ENCODE measurements at regions of chr2 and their contacts with region 1.

Region 1: GRCh38 chr2:43426305-43427031 is 169.4 kb downstream of the THADA start:
- H3K4me3 Mint-ChIP-seq: no peak overlapping the region
- H3K27ac Mint-ChIP-seq: peak overlapping the region; percentile 83
- H3K4me1 Mint-ChIP-seq: peaks cover 35% of the 10 kb centered on the region
- H3K27me3 Mint-ChIP-seq: no peaks in the 10 kb centered on the region

Region 2: GRCh38 chr2:43455731-43456642 is 29.5 kb after region 1 on chr2:
- intact Hi-C with region 1: loop called (anchors 1 kb)
- H3K4me3 Mint-ChIP-seq: no peak overlapping the region
- H3K27ac Mint-ChIP-seq: peak overlapping the region; percentile 35
- H3K4me1 Mint-ChIP-seq: peaks cover 63% of the 10 kb centered on the region
- H3K27me3 Mint-ChIP-seq: no peaks in the 10 kb centered on the region

Region 3: DNA sequence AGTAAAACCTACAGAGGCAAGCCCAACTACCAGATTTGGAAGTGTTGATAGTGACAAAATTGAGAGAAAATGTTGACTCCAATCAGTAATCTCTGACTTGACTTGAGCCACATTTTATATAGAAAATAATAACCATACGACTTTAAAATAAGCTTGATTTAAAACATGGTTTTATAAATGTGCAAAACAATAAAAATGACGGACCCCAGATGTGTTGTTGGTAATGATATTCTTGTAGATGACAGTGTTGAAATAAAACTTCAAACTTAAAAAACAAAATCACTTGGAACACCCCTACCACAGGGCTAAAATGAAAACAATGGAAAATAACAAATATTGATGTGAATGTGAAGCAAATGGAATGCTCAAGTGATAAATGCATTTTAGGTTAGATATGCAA is 1996.5 kb after region 1 on chr2:
- intact Hi-C with region 1: no loop called
- H3K4me3 Mint-ChIP-seq: no peak overlapping the region
- H3K27ac Mint-ChIP-seq: no peak overlapping the region
- H3K4me1 Mint-ChIP-seq: peaks cover 6% of the 10 kb centered on the region
- H3K27me3 Mint-ChIP-seq: no peaks in the 10 kb centered on the region